A549 (cell line): ENCODE measurements at regions of chr12 and their contacts with region 1.

Region 1: DNA sequence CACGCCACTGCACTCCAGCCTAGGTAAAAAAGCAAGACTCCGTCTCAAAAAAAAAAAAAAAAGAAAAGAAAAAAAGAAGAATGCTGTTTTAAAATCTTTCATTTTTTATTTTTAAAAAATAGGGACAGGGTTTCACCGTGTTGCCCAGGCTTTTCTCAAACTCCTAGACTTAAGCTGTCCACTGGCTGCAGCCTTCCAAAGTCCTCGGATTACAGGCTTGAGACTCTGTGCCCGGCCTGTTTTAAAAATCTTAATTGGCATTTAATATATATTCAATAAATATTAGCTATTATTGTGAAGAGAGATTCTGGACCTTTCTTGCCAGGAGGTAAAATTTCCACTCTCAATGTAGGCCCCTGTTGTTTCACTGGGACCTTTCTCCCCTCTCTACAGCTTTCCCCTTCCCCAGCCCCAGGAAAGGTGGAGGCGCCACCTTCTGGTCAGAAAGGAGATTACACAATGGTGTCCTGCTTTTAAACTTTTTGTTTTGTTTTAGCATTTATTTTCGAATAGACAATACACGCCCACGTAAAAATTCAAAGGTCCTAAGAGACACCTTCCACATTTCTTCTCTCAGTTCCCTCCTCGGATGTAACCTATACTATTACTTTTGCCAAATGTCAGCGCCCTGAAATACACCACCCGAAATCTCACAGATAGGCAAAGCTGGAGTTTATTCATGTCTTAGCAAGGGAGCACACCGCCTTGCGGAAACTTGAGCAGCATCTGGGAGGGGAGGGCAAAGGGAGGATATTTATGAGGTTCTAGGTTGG is 23.8 kb upstream of the PHC1 start:
- DNase-seq: peak; percentile 51 to 66
- ATAC-seq: peak; percentile 82 to 93
- H3K4me3 ChIP-seq: peak overlapping the region; percentile 42
- H3K27ac ChIP-seq: peak overlapping the region in 1 of 2 experiments; percentile 44; a peak in 2 of 6 replicates
- H3K4me1 ChIP-seq: no peaks in the 10 kb centered on the region
- CTCF ChIP-seq: peak; percentile 96
- EP300 ChIP-seq: no peak
- POLR2A ChIP-seq: no peak
- RAD21 ChIP-seq: peak; percentile 79 to 82

Region 2: GRCh38 chr12:8662593-8662992 is 227.9 kb before region 1 on chr12 and contains the start of gene MFAP5:
- CTCF ChIA-PET with region 1: interaction called, 13 read pairs
- POLR2A ChIA-PET with region 1: no interaction called
- DNase-seq: no peak
- ATAC-seq: 0 out of 6 replicates have a peak, but pooled peaks of 1 of the 2 experiments have one; percentile 36
- H3K4me3 ChIP-seq: no peak within 1 kb of the TSS
- H3K27ac ChIP-seq: no peak within 1 kb of the TSS
- H3K4me1 ChIP-seq: no peaks in the 10 kb centered on the region; the same call in 2 of the 3 replicates
- CTCF ChIP-seq: no peak
- EP300 ChIP-seq: no peak
- POLR2A ChIP-seq: no peak
- RAD21 ChIP-seq: no peak
- polyA plus RNA-seq, gene MFAP5: 0.40 and 0.48 TPM in 2 replicates

Region 3: DNA sequence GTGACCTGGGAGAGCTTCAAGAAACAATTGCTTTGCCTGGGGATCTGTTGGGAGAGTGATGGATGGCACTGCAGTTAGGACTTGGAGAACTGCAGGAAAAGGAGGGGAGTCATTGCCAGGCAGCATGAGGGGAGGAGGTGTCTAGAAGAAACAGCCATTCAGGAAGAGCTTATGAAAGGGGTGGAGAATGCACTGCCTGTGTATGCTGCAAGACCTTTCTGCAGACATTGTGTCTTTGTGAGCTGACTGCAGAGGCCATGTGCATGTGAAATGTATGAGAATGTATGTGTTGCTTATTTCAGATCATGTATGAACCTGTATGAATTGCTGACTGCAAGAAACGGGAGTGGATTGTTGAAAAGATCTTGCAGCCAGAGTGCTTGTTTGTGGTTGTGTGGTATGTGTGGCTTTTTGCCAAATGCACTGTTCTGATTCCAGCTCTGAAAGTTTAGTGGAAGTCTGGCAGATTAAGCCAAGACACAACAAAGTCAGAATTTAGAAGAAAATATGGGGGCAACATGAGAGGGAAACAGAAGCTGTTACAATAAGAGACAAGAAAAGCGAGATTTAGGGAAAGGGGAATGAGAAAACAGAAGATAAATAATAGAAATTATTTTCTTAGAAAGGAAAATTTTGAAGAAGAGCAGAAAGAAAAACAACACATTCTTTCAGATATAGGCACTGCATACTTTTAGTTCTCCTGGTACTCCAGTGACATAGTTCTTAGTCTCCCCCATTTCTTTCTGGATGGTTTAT is 202.5 kb before region 1 on chr12:
- CTCF ChIA-PET with region 1: interaction called, 60 read pairs
- POLR2A ChIA-PET with region 1: no interaction called
- DNase-seq: peak; percentile 36 to 76
- ATAC-seq: peak; percentile 95 to 97
- H3K4me3 ChIP-seq: 0 out of 3 replicates have a peak overlapping the region, but pooled peaks have one; percentile 3
- H3K27ac ChIP-seq: peak overlapping the region; percentile 5 to 58; a peak in 2 of 6 replicates
- H3K4me1 ChIP-seq: peaks cover 12% of the 10 kb centered on the region
- CTCF ChIP-seq: no peak
- EP300 ChIP-seq: no peak
- POLR2A ChIP-seq: no peak
- RAD21 ChIP-seq: no peak

Region 4: DNA sequence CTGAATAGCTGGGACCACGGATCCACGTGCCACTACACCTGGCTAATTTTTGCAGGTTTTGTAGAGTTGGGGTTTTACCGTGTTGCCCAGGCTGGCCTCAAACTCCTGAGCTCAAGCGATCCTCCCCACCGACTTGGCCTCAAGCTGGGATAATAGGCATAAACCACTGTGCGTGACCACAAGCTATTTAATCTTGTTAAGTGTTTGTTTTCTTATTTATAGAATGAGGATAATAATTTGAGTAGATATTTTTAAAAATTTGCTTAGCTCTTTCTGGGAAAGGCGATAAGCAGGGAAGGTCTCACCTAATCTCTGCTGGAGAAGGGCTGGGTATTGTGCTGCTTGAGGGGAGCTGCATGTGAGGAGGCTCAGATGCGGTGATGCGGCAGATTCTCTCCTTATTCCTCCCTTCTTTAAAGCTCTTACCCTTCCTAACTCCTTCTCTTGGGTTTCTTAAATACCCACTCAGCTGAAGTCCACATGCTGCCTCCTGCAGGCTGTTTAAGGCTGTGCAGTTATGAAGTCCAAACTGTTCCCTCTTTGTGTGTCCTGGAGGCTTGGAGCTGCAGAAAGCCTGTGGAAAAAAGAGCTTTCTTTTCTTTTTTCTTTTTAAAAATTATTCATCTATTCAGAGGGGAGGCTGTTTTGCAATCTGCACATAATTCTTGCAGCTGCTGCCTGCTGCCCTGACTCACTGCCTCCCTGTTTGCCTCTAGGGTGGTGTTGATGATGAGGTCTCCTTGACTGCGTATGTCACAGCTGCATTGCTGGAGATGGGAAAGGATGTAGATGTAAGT is 30.1 kb before region 1 on chr12:
- CTCF ChIA-PET with region 1: interaction called, 21 read pairs
- POLR2A ChIA-PET with region 1: no interaction called
- DNase-seq: peak in 1 of 2 experiments; percentile 69
- ATAC-seq: peak; percentile 81 to 93; a peak in 5 of 6 replicates
- H3K4me3 ChIP-seq: no peak overlapping the region
- H3K27ac ChIP-seq: no peak overlapping the region
- H3K4me1 ChIP-seq: no peaks in the 10 kb centered on the region
- CTCF ChIP-seq: peak; percentile 42; the same call in 2 of the 3 replicates
- EP300 ChIP-seq: no peak
- POLR2A ChIP-seq: no peak
- RAD21 ChIP-seq: peak; percentile 38 to 57; a peak in 4 of 5 replicates

Region 5: GRCh38 chr12:8905546-8905945 is 15.0 kb after region 1 on chr12:
- CTCF ChIA-PET with region 1: interaction called, 22 read pairs
- POLR2A ChIA-PET with region 1: no interaction called
- DNase-seq: no peak
- ATAC-seq: no peak
- H3K4me3 ChIP-seq: no peak overlapping the region
- H3K27ac ChIP-seq: no peak overlapping the region
- H3K4me1 ChIP-seq: no peaks in the 10 kb centered on the region
- CTCF ChIP-seq: no peak
- EP300 ChIP-seq: no peak
- POLR2A ChIP-seq: no peak
- RAD21 ChIP-seq: no peak